GM12878 (cell line): ENCODE measurements at regions of chr1 and their contacts with region 1.

Region 1: GRCh38 chr1:56578963-56579875 is at the start of gene PLPP3:
- DNase-seq: no peak
- ATAC-seq: peak; percentile 59
- H3K4me3 ChIP-seq: peak within 1 kb of the TSS; percentile 72
- H3K27ac ChIP-seq: no peak within 1 kb of the TSS
- H3K4me1 ChIP-seq: no peaks in the 10 kb centered on the region
- H3K27me3 ChIP-seq: peaks cover 0 to 11% of the 10 kb centered on the region in 2 experiments; a peak in 2 of 4 replicates
- CTCF ChIP-seq: peak in 2 of 3 experiments; percentile 27 to 32; a peak in 4 of 6 replicates
- EP300 ChIP-seq: no peak
- POLR2A ChIP-seq: no peak
- RAD21 ChIP-seq: peak; percentile 53
- polyA plus RNA-seq, gene PLPP3: 7.4 to 8.0 TPM

Region 2: GRCh38 chr1:55702064-55702463 is 877.2 kb before region 1 on chr1:
- CTCF ChIA-PET with region 1: interaction called, 30 read pairs
- POLR2A ChIA-PET with region 1: no interaction called
- RAD21 ChIA-PET with region 1: interaction called, 15 read pairs
- SMC1A ChIA-PET with region 1: interaction called, 6 read pairs
- in situ Hi-C with region 1: loop called (anchors 10 kb)
- intact Hi-C with region 1: loop called (anchors 2 kb)
- DNase-seq: no peak
- ATAC-seq: peak; percentile 85
- H3K4me3 ChIP-seq: no peak overlapping the region
- H3K27ac ChIP-seq: no peak overlapping the region
- H3K4me1 ChIP-seq: no peaks in the 10 kb centered on the region
- H3K27me3 ChIP-seq: no peaks in the 10 kb centered on the region
- CTCF ChIP-seq: peak; percentile 64 to 90 (median 83)
- EP300 ChIP-seq: no peak
- POLR2A ChIP-seq: no peak
- RAD21 ChIP-seq: peak; percentile 57

Region 3: GRCh38 chr1:56135069-56135863 is 444.0 kb before region 1 on chr1:
- CTCF ChIA-PET with region 1: interaction called, 22 read pairs
- POLR2A ChIA-PET with region 1: interaction called, 3 read pairs
- RAD21 ChIA-PET with region 1: interaction called, 59 read pairs
- SMC1A ChIA-PET with region 1: interaction called, 47 read pairs
- in situ Hi-C with region 1: no loop called
- intact Hi-C with region 1: loop called (anchors 5 kb)
- DNase-seq: no peak
- ATAC-seq: peak; percentile 67
- H3K4me3 ChIP-seq: no peak overlapping the region
- H3K27ac ChIP-seq: peak overlapping the region; percentile 56
- H3K4me1 ChIP-seq: peaks cover 25% of the 10 kb centered on the region
- H3K27me3 ChIP-seq: no peaks in the 10 kb centered on the region
- CTCF ChIP-seq: no peak
- EP300 ChIP-seq: peak in 1 of 2 experiments; percentile 87; a peak in 1 of 4 replicates
- POLR2A ChIP-seq: no peak
- RAD21 ChIP-seq: 0 out of 2 replicates have a peak, but pooled peaks have one; percentile 1

Region 4: GRCh38 chr1:56409094-56409691 is 170.0 kb before region 1 on chr1:
- CTCF ChIA-PET with region 1: interaction called, 257 read pairs
- POLR2A ChIA-PET with region 1: interaction called, 3 read pairs
- RAD21 ChIA-PET with region 1: interaction called, 146 read pairs
- SMC1A ChIA-PET with region 1: interaction called, 154 read pairs
- in situ Hi-C with region 1: no loop called
- intact Hi-C with region 1: loop called (anchors 1 kb)
- DNase-seq: no peak
- ATAC-seq: peak; percentile 79
- H3K4me3 ChIP-seq: no peak overlapping the region
- H3K27ac ChIP-seq: no peak overlapping the region
- H3K4me1 ChIP-seq: no peaks in the 10 kb centered on the region
- H3K27me3 ChIP-seq: no peaks in the 10 kb centered on the region
- CTCF ChIP-seq: peak; percentile 49 to 53 (median 52); a peak in 5 of 6 replicates
- EP300 ChIP-seq: no peak
- POLR2A ChIP-seq: no peak
- RAD21 ChIP-seq: peak; percentile 44

Region 5: DNA sequence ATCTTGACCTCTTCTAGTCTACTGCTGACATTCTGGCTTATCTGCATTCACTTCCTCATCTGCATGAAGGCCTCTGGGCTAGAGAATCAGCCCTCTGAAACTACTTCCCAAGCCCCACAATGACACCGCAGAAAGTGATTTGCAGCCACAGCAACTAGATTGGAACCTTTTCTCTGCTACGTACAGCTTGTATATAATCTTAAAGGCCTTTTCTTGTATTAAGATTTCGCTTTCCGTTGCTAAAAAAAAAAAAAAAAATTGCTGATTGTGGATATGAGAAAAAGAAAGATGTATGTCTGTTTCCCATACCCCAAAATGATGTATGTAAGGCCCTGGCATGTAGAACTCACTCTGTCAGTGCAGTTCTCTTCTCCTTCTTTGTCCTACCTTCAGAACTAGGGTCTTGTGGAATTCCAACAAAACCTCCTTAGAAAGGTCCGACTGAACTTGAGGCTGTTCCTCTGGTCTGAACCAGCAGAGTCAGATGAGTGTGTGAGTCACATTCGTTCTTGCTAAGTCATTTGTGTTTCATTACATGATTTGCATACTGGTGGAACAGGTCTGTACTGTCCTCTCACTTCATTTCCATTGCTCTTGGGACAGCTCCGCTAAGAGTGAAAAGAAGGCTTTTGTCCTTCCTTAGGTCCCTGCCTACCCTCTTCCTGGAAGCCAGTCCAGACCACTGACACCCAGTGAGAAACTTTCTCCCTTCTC is 62.5 kb before region 1 on chr1:
- CTCF ChIA-PET with region 1: interaction called, 33 read pairs
- POLR2A ChIA-PET with region 1: interaction called, 10 read pairs
- RAD21 ChIA-PET with region 1: interaction called, 103 read pairs
- SMC1A ChIA-PET with region 1: interaction called, 74 read pairs
- in situ Hi-C with region 1: no loop called
- intact Hi-C with region 1: no loop called
- DNase-seq: peak; percentile 43
- ATAC-seq: peak; percentile 96
- H3K4me3 ChIP-seq: peak overlapping the region; percentile 14; the same call in 1 of the 2 replicates
- H3K27ac ChIP-seq: peak overlapping the region; percentile 45; the same call in 1 of the 2 replicates
- H3K4me1 ChIP-seq: peaks cover 32% of the 10 kb centered on the region
- H3K27me3 ChIP-seq: no peaks in the 10 kb centered on the region; a peak in 2 of 4 replicates
- CTCF ChIP-seq: no peak
- EP300 ChIP-seq: peak in 1 of 2 experiments; percentile 10; a peak in 1 of 4 replicates
- POLR2A ChIP-seq: peak; percentile 34; the same call in 1 of the 2 replicates
- RAD21 ChIP-seq: no peak

Region 6: GRCh38 chr1:56557746-56558145 is 21.5 kb before region 1 on chr1:
- CTCF ChIA-PET with region 1: interaction called, 253 read pairs
- POLR2A ChIA-PET with region 1: interaction called, 195 read pairs
- RAD21 ChIA-PET with region 1: interaction called, 381 read pairs
- SMC1A ChIA-PET with region 1: interaction called, 439 read pairs
- in situ Hi-C with region 1: no loop called
- intact Hi-C with region 1: no loop called
- DNase-seq: no peak
- ATAC-seq: no peak
- H3K4me3 ChIP-seq: no peak overlapping the region
- H3K27ac ChIP-seq: no peak overlapping the region
- H3K4me1 ChIP-seq: no peaks in the 10 kb centered on the region
- H3K27me3 ChIP-seq: no peaks in the 10 kb centered on the region
- CTCF ChIP-seq: no peak
- EP300 ChIP-seq: no peak
- POLR2A ChIP-seq: no peak
- RAD21 ChIP-seq: no peak

Region 7: GRCh38 chr1:56658254-56658653 is 79.0 kb after region 1 on chr1:
- CTCF ChIA-PET with region 1: no interaction called
- POLR2A ChIA-PET with region 1: no interaction called
- RAD21 ChIA-PET with region 1: no interaction called
- SMC1A ChIA-PET with region 1: no interaction called
- in situ Hi-C with region 1: no loop called
- intact Hi-C with region 1: no loop called
- DNase-seq: no peak
- ATAC-seq: no peak
- H3K4me3 ChIP-seq: no peak overlapping the region
- H3K27ac ChIP-seq: no peak overlapping the region
- H3K4me1 ChIP-seq: no peaks in the 10 kb centered on the region
- H3K27me3 ChIP-seq: no peaks in the 10 kb centered on the region
- CTCF ChIP-seq: no peak
- EP300 ChIP-seq: no peak
- POLR2A ChIP-seq: no peak
- RAD21 ChIP-seq: no peak